Activated CD4-positive, alpha-beta T cell treated with anti-CD3 and anti-CD28 coated beads, Interleukin-2, amount 10 ng/mL, durations not matched to agents 24 days and 14 days (primary cell): ENCODE measurements at regions of chr17 and their contacts with region 1.

Region 1: GRCh38 chr17:28842282-28843012 is at the start of gene FAM222B:
- DNase-seq: peak; percentile 97
- H3K4me3 Mint-ChIP-seq: peak within 1 kb of the TSS; percentile 98
- H3K27ac Mint-ChIP-seq: peak within 1 kb of the TSS; percentile 96
- H3K4me1 Mint-ChIP-seq: peaks cover 19% of the 10 kb centered on the region
- H3K27me3 Mint-ChIP-seq: no peaks in the 10 kb centered on the region
- total RNA-seq, gene FAM222B: 22.4 and 24.0 TPM in 2 replicates

Region 2: DNA sequence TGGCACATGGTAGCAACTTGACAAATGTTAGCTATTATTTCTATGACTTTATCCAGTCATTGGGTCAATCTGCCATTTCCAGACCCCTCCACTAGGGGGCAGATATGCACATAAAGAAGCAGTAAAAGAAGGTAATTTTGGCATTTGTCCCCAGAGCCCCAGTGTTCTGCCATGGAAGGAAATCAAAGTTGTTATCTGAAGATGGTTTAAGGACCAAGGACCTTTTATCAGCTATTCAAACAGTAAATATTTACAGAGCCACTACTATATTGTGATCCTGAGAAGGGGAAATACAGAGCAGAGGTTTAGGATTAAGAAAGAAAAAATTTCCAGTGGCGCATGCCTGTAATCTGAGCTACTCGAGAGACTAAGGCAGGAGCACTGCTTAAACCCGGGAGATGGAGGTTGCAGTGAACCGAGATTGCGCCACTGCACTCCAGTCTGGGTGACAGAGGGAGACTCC is 78.6 kb before region 1 on chr17:
- intact Hi-C with region 1: loop called (anchors 2 kb)
- DNase-seq: peak; percentile 93
- H3K4me3 Mint-ChIP-seq: no peak overlapping the region
- H3K27ac Mint-ChIP-seq: no peak overlapping the region
- H3K4me1 Mint-ChIP-seq: peaks cover 15% of the 10 kb centered on the region
- H3K27me3 Mint-ChIP-seq: no peaks in the 10 kb centered on the region

Region 3: DNA sequence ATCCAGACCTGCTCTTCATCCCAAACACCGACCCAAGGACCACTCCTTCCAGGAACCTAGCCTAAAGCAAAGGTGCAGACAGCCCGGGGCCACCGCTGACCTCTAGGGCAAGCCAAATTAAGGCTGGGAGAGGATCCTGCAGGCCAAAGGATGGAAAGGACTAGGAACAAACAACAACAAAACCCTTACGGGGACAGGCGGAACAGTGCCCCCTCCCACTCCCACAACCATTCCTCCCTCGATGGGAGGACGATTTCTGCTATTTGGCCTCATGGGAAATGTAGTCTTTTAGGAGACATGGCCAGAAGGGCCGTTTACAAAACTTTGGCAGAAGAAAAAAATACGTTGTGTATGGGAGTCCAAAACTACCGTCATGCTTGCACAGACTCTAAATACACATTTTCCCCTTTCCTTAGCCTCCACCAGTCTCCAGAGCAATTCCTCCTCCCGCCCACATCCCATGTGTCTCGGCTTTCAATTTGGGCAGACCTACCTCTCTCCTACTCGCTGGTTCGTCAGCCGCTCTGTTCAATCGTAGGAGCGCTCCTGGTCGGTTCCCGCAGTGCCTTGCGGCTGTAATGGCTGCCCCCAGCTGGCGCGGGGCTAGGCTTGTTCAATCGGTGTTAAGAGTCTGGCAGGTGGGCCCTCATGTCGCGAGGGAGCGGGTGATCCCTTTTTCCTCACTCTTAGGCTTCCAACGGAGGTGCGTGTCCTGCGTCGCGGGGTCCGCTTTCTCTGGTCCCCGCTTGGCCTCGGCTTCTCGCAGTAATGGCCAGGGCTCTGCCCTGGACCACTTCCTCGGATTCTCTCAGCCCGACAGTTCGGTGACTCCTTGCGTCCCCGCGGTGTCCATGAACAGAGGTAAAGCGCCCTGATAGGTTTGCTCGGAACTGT is 12.3 kb after region 1 on chr17 and contains the start of gene ERAL1:
- intact Hi-C with region 1: loop called (anchors 1 kb)
- DNase-seq: peak; percentile 96
- H3K4me3 Mint-ChIP-seq: peak within 1 kb of the TSS; percentile 82
- H3K27ac Mint-ChIP-seq: peak within 1 kb of the TSS; percentile 85
- H3K4me1 Mint-ChIP-seq: peaks cover 19% of the 10 kb centered on the region
- H3K27me3 Mint-ChIP-seq: no peaks in the 10 kb centered on the region
- total RNA-seq, gene ERAL1: 56.8 and 61.2 TPM in 2 replicates

Region 4: DNA sequence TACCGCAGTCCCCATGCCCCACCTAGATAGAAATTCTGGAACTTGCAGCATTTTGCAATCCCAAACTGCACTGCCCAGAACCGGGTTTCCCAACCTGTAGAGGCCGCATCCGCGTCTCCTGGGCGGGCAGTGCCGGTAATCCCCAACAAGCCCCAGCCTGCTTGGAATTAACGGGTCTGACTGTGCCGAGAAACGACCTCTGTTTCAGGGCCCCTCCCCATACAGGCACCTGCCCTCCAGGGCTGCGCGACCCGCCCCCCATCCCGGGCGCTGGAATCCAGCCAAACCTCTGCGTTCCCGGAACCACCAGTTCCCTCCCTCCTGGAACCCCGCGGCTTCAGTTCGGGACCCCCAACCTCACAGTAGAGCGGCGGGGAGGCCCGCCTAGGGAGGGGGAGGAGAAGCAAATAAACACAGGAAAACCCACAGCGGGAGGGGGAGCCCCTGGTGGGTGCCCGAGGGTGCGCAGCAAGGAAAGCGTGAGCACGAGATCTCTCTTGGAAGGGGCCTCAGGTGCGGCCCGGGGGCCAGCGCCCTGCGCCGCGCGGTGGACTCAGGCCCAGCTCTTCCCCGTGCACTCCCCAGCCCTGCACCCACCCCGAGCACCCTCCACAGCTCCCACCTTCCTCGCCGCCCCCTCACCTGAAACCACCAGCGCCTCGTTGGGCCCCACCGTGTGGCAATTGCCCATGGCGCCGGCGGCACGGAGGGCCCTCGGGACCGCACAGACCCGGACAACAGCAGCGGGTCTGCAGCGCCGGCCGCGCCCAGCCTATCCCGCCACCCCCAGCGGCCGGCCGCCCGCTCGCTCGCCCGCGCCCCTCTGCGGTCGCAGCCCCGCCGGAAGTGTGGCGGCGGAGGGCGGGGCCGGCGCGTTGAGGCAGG is 54.7 kb after region 1 on chr17 and contains the start of gene FLOT2:
- intact Hi-C with region 1: loop called (anchors 2 kb)
- DNase-seq: peak; percentile 89
- H3K4me3 Mint-ChIP-seq: peak within 1 kb of the TSS; percentile 97
- H3K27ac Mint-ChIP-seq: peak within 1 kb of the TSS; percentile 98
- H3K4me1 Mint-ChIP-seq: peaks cover 64% of the 10 kb centered on the region
- H3K27me3 Mint-ChIP-seq: no peaks in the 10 kb centered on the region
- total RNA-seq, gene FLOT2: 109 and 111 TPM in 2 replicates